ENCODE measurements at regions of chr19 and their contacts with region 1.

Region 1: GRCh38 chr19:42529248-42529764 is 1.0 kb upstream of the CEACAM1 start:
- DNase-seq: peak in 1 of 2 donors; percentile 66
- ATAC-seq: peak; percentile 82
- H3K4me3 ChIP-seq: no peak overlapping the region
- H3K27ac ChIP-seq: no peak overlapping the region
- H3K4me1 ChIP-seq: no peaks in the 10 kb centered on the region
- H3K27me3 ChIP-seq: no peaks in the 10 kb centered on the region

Region 2: DNA sequence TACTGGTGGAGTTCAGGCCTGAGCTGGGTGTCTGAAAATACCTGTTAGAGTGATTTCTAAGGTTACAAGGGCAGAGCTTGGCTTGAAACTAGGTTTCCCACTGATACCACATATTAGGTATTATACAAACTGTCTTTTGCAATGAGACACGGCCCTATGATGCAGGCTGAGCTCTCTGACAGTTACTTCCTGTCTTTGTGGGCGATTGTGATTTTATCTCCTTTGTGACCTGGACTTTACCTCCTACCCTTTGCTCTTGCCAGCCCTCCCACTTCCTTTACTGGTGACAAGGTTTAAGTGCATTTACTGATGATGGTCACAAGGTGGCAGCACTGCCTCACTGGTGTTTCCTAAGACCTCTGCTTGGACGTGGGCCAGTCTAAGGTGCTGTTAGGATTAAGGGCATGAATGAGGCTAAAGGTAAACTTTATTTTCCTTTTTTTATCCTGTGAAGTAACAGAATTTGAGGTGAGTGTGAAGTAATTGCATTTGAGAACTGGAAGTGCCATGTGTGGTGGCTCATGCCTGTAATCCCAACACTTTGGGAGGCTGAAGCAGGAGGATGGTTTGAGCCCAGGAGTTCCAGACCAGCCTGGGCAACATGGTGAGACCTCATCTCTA is 78.9 kb before region 1 on chr19:
- intact Hi-C with region 1: loop called in 1 of 2 experiments (anchors 2 kb)
- DNase-seq: peak; percentile 80 to 81
- ATAC-seq: peak; percentile 89
- H3K4me3 ChIP-seq: no peak overlapping the region
- H3K27ac ChIP-seq: no peak overlapping the region
- H3K4me1 ChIP-seq: no peaks in the 10 kb centered on the region
- H3K27me3 ChIP-seq: no peaks in the 10 kb centered on the region

Region 3: DNA sequence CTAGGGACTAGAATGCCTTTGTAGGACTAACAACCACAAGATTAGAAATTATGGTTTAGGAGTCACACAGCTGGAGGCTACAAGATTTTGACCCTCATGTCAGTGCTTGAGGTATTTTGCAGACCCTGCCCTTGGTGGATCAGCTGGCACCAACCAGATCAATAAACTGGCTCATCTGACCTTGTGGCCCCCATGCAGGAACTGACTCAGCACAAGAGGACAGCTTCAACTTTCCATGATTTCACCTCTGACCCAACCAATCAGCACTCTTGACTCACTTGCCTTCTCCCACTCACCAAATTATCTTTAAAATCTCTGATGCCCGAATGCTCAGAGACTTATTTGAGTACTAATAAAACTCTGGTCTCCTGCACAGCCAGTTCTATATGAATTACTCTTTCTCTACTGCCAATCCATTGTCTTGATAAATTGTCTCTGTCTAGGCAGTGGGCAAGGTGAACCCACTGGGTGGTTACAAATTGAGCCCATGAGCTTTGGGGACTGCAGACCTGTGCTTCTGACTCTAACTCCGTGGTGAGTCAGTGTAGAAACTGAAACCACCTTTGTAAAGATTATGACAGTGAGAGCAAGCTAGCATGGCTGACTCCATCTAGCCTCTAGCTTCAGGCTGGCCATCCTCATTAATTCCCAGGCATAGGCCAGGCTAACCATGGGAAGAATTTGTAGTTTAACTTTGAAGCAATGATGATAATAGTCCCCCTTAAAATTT is 99.3 kb after region 1 on chr19:
- intact Hi-C with region 1: no loop called
- DNase-seq: no peak
- ATAC-seq: no peak
- H3K4me3 ChIP-seq: no peak overlapping the region
- H3K27ac ChIP-seq: no peak overlapping the region
- H3K4me1 ChIP-seq: no peaks in the 10 kb centered on the region
- H3K27me3 ChIP-seq: no peaks in the 10 kb centered on the region